PC-9 (cell line): ENCODE measurements at regions of chr3 and their contacts with region 1.

Region 1: GRCh38 chr3:69120879-69121464 is 1.4 kb downstream of the LMOD3 start:
- DNase-seq: peak; percentile 64 to 77
- H3K4me3 ChIP-seq: no peak overlapping the region
- H3K27ac ChIP-seq: no peak overlapping the region
- H3K4me1 ChIP-seq: peaks cover 18% of the 10 kb centered on the region
- H3K27me3 ChIP-seq: no peaks in the 10 kb centered on the region
- CTCF ChIP-seq: peak; percentile 83

Region 2: DNA sequence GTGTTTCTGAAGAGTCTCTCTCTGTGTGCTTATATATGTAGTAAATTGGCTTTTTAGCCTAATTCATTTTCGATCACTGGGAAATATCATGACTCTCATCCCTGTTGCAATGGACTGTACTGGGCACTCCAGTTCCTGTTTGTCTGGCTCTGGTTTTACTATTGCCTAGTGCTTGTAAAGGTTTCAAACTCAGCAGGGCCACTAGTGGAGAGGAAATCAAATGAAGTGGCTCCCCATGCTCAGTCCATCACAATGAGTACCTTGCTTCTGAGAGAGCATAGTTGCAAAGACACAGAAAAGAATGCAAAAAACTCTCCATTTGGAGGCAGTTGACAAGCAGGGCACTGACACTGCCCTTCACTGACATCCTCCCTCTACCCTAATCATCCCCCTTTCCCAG is 356.4 kb before region 1 on chr3:
- CTCF ChIA-PET with region 1: no interaction called
- POLR2A ChIA-PET with region 1: no interaction called
- intact Hi-C with region 1: no loop called
- DNase-seq: no peak
- H3K4me3 ChIP-seq: no peak overlapping the region
- H3K27ac ChIP-seq: no peak overlapping the region
- H3K4me1 ChIP-seq: no peaks in the 10 kb centered on the region
- H3K27me3 ChIP-seq: no peaks in the 10 kb centered on the region
- CTCF ChIP-seq: no peak

Region 3: DNA sequence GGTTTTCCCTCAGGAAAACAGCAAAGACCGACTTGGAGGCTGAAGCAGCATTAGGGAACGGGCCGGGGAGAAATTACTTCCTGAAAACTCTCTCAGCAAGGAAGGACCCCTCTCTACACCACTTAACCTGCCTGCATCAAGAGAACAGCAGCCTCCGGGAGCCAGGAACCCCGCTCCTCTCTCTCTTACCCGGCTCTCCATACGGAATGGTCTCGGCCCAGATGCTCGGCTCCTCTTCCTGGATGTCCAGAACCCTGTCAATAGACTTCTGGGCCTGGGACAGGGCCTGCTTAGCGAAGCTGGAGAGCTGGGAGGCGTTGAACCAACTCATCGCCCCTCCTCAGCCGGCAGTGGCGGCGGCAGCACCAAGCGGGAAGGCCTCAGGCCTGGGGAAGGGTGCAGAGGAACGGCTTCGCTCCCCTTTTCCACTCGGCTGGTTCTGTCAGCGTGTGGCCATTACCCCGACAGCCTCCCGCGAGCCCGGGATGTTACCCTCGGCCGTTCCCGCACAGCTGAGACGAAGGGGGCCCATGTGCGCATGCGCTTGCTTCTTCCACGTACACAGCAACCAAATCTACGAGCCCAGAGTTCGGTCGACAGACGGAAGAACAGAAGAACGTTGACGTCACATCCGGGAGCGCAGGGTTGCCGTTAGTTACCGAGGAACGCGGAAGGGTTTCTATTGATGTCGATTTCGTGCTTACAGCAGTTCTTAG is 69.1 kb before region 1 on chr3 and contains the start of gene TMF1:
- CTCF ChIA-PET with region 1: no interaction called
- POLR2A ChIA-PET with region 1: no interaction called
- intact Hi-C with region 1: loop called (anchors 1 kb)
- DNase-seq: peak; percentile 93 to 95
- H3K4me3 ChIP-seq: peak within 1 kb of the TSS; percentile 77
- H3K27ac ChIP-seq: peak within 1 kb of the TSS; percentile 70
- H3K4me1 ChIP-seq: no peaks in the 10 kb centered on the region
- H3K27me3 ChIP-seq: no peaks in the 10 kb centered on the region
- CTCF ChIP-seq: no peak
- total RNA-seq, gene TMF1: 34.5 and 35.5 TPM in 2 replicates

Region 4: GRCh38 chr3:69095636-69096035 is 25.3 kb before region 1 on chr3:
- CTCF ChIA-PET with region 1: no interaction called
- POLR2A ChIA-PET with region 1: no interaction called
- intact Hi-C with region 1: no loop called
- DNase-seq: no peak
- H3K4me3 ChIP-seq: no peak overlapping the region
- H3K27ac ChIP-seq: no peak overlapping the region
- H3K4me1 ChIP-seq: peaks cover 25% of the 10 kb centered on the region
- H3K27me3 ChIP-seq: no peaks in the 10 kb centered on the region
- CTCF ChIP-seq: no peak

Region 5: DNA sequence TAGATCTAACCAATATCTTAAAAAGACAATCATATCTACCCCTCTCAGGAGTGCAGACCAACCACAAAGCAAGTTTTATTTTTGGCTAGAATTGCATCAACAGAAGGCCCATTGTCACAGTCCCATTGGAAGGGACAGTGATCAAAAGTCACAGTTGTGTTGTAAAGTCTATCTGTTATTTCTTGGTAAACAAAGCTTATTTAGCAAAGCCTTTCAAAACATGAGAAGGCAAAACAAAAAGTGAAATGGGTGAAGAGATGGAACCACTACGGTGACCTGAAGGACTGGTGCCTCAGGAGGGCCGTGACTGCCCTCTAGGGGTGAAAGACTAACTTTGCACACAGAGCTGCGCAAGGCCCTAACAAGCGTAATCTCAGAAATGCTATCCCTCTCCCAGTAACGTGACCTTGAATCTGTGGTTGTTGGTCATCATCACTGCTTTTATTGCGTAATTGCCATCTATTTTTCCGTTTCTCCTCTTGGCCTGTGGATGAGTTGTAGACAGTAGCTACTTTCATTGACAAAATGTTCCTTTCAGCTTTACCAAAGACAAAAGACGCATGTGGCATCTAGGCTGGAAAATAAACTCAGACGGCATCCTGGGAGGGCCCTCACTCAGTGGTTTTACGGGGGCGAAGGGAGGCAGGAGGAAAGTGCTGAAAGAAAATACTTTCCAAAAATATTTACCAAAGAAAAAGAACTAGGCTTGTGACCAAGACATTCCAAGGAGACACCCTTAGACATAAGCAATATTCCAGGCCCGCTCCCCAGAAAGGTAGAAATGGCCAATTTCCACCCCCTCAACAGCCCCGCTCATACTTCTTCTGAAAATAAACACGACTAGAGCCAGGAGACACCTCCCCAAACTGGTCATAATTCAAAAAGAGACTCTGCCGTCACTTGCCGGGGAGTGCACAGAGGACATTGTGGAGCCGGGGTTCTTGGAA is 185.5 kb after region 1 on chr3:
- CTCF ChIA-PET with region 1: interaction called, 8 read pairs
- POLR2A ChIA-PET with region 1: no interaction called
- intact Hi-C with region 1: loop called (anchors 1 kb)
- DNase-seq: peak; percentile 58 to 70
- H3K4me3 ChIP-seq: no peak overlapping the region
- H3K27ac ChIP-seq: peak overlapping the region; percentile 29; the same call in 1 of the 2 replicates
- H3K4me1 ChIP-seq: peaks cover 12% of the 10 kb centered on the region; the same call in 1 of the 2 replicates
- H3K27me3 ChIP-seq: no peaks in the 10 kb centered on the region
- CTCF ChIP-seq: peak; percentile 87

Region 6: GRCh38 chr3:69983546-69984265 is 862.7 kb after region 1 on chr3:
- CTCF ChIA-PET with region 1: no interaction called
- POLR2A ChIA-PET with region 1: no interaction called
- intact Hi-C with region 1: no loop called
- DNase-seq: no peak
- H3K4me3 ChIP-seq: no peak overlapping the region
- H3K27ac ChIP-seq: no peak overlapping the region
- H3K4me1 ChIP-seq: no peaks in the 10 kb centered on the region
- H3K27me3 ChIP-seq: peaks cover 19% of the 10 kb centered on the region; the same call in 1 of the 2 replicates
- CTCF ChIP-seq: no peak